Transverse colon (tissue), 4 donors: ENCODE measurements at regions of chr11 and their contacts with region 1.

Region 1: GRCh38 chr11:62169091-62169847 is 20.7 kb upstream of the SCGB1D1 start:
- DNase-seq: no peak
- H3K4me3 ChIP-seq: no peak overlapping the region
- H3K27ac ChIP-seq: no peak overlapping the region
- H3K4me1 ChIP-seq: peaks cover 0 to 7% (median 2%) of the 10 kb centered on the region in 4 donors
- H3K27me3 ChIP-seq: peaks cover 44% of the 10 kb centered on the region
- CTCF ChIP-seq: no peak
- EP300 ChIP-seq: no peak
- POLR2A ChIP-seq: no peak

Region 2: GRCh38 chr11:62306227-62306626 is 137.0 kb after region 1 on chr11:
- in situ Hi-C with region 1: loop called in 2 of 4 experiments (anchors 10 kb)
- intact Hi-C with region 1: loop called (anchors 5 kb)
- DNase-seq: no peak
- H3K4me3 ChIP-seq: no peak overlapping the region
- H3K27ac ChIP-seq: no peak overlapping the region
- H3K4me1 ChIP-seq: no peaks in the 10 kb centered on the region
- H3K27me3 ChIP-seq: peaks cover 26% of the 10 kb centered on the region
- CTCF ChIP-seq: no peak
- EP300 ChIP-seq: no peak
- POLR2A ChIP-seq: no peak

Region 3: DNA sequence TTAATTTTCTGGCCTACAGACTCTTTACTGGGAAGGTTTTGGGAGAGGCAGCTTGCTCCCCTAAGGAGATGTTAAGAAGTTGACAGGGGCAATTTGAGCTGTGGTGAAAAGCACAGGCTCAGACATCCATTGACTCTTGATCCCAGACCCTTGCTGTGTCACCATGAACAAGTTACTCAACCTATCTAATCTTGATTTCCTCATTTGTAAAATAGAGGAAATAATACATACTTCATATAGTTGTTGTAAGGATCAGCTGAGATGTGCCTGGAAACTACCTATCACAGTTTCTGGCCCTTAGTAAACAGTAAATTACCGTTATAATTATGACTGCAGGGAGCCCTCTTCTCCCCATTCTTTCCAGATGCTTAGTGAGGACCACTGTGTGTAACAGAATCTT is 146.2 kb after region 1 on chr11:
- in situ Hi-C with region 1: loop called in 2 of 4 experiments (anchors 10 kb)
- intact Hi-C with region 1: no loop called
- DNase-seq: no peak
- H3K4me3 ChIP-seq: no peak overlapping the region
- H3K27ac ChIP-seq: no peak overlapping the region
- H3K4me1 ChIP-seq: peaks cover 0 to 3% (median 0%) of the 10 kb centered on the region in 4 donors
- H3K27me3 ChIP-seq: no peaks in the 10 kb centered on the region
- CTCF ChIP-seq: no peak
- EP300 ChIP-seq: no peak
- POLR2A ChIP-seq: no peak